Cardiac septum (tissue), 1 donor: ENCODE measurements at regions of chr10 and their contacts with region 1.

Region 1: DNA sequence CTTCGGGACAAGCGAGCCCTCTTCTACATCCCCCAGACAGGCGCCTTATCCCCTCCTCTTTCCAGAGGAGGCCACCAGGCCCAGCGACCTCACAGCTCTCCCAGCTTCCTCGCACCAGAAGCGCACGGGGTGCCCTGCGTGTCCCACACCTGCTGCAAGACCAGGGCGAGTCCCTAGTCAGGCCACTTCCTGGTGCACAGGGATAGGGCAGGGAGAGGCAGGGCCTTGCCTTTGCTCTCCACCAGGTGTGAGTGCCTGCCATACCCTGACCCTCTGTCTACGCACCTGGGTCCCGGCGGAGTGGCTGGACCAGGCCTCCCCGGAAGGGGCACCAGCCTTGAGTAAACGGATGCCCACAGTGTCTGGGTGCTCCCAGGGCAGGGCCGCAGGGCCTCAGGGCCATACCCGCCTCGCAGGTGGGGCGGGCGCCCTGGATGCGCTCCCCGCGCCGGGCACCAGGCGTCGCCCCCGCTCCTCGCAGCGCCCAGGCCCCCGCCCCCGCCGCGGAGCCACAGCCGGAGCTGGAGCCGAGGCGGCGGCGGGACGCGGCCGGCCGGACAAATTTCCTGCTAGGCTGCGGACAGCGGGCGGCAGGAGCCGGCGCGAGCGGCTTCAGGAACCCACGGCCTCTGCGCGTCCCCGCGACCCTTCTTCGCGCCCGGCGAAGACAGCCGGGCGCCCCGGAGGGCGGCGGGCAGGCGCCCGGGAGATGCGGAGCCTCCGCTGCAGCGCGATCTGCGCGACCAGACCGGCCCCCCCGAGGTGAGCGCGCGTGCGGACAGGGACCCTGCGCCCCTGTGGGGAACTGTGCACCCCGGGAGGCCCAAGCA is at the start of gene PTPRE:
- DNase-seq: peak; percentile 91
- total RNA-seq, gene PTPRE: 51.1 TPM

Region 2: DNA sequence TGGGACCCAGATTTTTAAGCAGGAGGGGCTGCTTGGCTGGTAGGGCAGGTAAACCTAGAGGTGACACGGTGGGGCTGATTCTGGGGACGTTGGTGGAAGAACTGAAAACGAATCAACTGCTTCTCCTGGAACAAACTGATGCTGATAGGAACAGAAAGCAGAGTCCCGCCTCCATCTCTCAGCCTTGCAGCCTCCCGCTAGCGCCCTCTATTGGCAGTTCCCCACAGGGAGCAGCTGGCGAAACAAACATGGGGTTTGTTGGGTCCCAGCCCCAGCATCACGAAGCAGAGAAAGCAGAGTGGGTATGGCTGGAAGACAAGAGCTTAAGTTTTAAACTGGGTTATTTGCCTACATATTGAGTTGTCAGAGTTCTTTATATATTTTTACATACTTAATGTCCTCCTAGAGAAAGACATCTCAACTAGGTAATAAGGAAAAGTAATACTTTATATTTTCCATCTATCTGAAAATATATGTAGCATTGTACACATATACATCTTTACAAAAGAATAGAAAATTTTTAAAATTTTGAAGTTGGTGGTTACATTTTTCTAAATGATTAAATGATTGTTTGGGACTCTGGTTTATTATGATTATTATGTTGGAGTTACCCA is 212.1 kb before region 1 on chr10:
- intact Hi-C with region 1: no loop called
- DNase-seq: no peak

Region 3: GRCh38 chr10:127919418-127920271 is 12.9 kb after region 1 on chr10:
- intact Hi-C with region 1: loop called (anchors 2 kb)
- DNase-seq: peak; percentile 78

Region 4: GRCh38 chr10:127968027-127968441 is 61.3 kb after region 1 on chr10:
- intact Hi-C with region 1: loop called (anchors 2 kb)
- DNase-seq: no peak

Region 5: GRCh38 chr10:127976286-127976685 is 69.5 kb after region 1 on chr10:
- intact Hi-C with region 1: loop called (anchors 1 kb)
- DNase-seq: no peak

Region 6: GRCh38 chr10:128011175-128011979 is 104.6 kb after region 1 on chr10:
- intact Hi-C with region 1: loop called (anchors 1 kb)
- DNase-seq: peak; percentile 95

Region 7: GRCh38 chr10:128069351-128070051 is 162.7 kb after region 1 on chr10:
- intact Hi-C with region 1: loop called (anchors 1 kb)
- DNase-seq: no peak